Common myeloid progenitor, CD34-positive (primary cell): ENCODE measurements at regions of chr9 and their contacts with region 1.

Region 1: DNA sequence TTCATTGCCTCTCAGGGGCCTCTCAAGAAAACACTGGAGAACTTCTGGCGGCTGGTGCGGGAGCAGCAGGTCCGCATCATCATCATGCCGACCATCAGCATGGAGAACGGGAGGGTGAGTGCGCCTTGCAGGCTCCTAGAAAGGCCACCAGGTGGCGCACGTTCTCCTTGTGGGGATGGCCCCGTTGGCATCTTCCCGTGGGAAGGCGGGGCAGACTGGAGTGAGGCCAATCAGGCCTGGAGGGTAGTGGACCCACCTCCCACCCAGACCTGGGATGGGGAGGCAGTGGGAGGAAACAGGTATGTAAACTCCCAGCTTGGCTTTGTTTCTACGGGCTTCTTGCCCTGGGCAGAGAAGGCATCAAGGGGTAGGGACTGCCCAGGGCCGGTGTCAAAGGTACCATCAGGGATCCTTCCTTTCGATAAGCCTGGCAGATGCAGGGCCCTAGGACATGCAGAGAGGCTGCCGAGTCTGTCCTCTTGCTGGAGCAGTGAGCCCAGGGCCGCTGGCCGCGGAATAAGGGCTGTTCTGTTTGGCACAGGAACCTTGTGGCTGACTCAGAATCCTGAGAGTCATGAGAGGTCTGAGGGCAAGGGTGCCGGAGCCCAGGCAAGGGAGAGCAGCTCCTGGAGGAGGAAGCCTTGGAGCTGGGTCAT is 18.9 kb upstream of the SPTLC1 start:
- DNase-seq: peak; percentile 68 to 85 (median 83)
- H3K4me3 ChIP-seq: peak overlapping the region in 3 of 7 experiments; percentile 4 to 42 (median 24)
- H3K27ac ChIP-seq: no peak overlapping the region
- H3K4me1 ChIP-seq: peaks cover 0 to 8% (median 0%) of the 10 kb centered on the region in 4 experiments
- H3K27me3 ChIP-seq: no peaks in the 10 kb centered on the region

Region 2: GRCh38 chr9:92160786-92161185 is 26.7 kb after region 1 on chr9:
- CTCF ChIA-PET with region 1: no interaction called
- POLR2A ChIA-PET with region 1: no interaction called
- DNase-seq: no peak
- H3K4me3 ChIP-seq: no peak overlapping the region
- H3K27ac ChIP-seq: no peak overlapping the region
- H3K4me1 ChIP-seq: no peaks in the 10 kb centered on the region
- H3K27me3 ChIP-seq: no peaks in the 10 kb centered on the region

Region 3: DNA sequence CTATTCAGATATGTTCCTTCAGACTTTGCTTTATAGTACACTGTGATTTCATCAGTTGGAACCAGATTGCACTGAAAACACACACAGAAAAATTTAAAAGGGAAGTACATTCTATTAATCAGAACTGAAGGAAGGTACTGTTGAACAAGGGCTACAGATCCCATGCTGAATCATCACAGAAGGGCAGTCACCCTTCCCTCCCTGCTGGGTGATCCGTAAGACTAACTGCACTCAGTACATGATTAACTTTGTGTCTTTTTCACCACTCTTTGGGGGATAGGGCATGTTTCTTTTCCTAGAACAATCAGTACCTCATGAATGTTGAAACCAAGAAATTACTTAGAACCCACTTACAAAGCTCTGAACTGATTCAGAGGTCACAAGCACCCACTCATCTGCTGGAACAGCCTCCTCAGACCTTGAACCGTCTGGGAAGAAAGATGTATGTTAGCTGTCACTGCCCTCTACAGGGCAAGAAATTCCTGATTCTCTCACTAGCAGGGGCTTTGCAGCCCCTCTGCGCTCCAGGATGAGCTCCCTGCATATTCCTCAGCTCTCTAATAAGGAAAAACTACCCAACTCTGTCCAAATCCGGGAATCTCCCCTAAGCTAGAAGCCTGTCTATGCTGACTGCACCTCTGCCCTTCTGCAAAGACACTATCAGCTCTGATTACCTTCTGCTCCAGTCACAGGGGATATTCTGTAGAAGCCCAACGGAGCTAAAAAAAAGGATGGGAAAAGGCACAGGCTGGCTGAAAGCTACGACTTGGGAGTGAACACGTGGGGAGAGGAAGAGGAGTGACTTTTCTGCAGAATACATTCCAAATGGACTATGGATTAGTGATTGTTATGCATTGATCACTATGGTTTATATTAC is 108.4 kb after region 1 on chr9:
- CTCF ChIA-PET with region 1: interaction called, 191 read pairs
- POLR2A ChIA-PET with region 1: no interaction called
- DNase-seq: peak; percentile 2 to 28 (median 10)
- H3K4me3 ChIP-seq: no peak overlapping the region
- H3K27ac ChIP-seq: no peak overlapping the region
- H3K4me1 ChIP-seq: no peaks in the 10 kb centered on the region
- H3K27me3 ChIP-seq: no peaks in the 10 kb centered on the region